ENCODE measurements at regions of chr14 and their contacts with region 1.

Region 1: DNA sequence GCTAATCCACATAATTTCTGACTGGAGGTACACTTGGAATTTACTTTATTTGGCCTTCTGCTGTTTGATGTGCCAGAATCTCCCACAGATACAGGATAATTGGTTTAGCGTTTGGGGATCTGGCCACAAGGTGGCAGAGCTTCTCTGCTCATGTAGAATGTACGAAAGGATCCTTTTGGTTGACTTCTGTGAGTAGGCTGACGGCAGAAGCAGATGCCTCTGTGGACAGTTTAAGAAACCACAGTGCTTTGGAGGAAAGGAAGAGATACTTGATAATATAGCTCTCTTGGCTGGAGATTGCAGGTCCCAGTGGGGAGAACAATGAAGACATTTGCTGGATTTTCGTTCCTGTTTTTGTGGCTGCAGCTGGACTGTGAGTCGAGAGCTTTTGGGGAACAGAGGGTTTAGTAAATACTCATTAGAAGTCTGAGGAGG is 75.3 kb upstream of the OR4E1 start:
- DNase-seq: peak; percentile 81
- ATAC-seq: peak; percentile 87
- H3K4me3 Mint-ChIP-seq: peak overlapping the region; percentile 51
- H3K27ac Mint-ChIP-seq: peak overlapping the region; percentile 9
- H3K4me1 Mint-ChIP-seq: peaks cover 8% of the 10 kb centered on the region
- H3K27me3 Mint-ChIP-seq: peaks cover 8% of the 10 kb centered on the region
- CTCF ChIP-seq: peak; percentile 73

Region 2: GRCh38 chr14:21734457-21735074 is 14.3 kb before region 1 on chr14:
- CTCF ChIA-PET with region 1: interaction called, 25 read pairs
- POLR2A ChIA-PET with region 1: no interaction called
- intact Hi-C with region 1: no loop called
- DNase-seq: peak; percentile 57
- ATAC-seq: peak; percentile 50
- H3K4me3 Mint-ChIP-seq: peak overlapping the region; percentile 62
- H3K27ac Mint-ChIP-seq: no peak overlapping the region
- H3K4me1 Mint-ChIP-seq: peaks cover 14% of the 10 kb centered on the region
- H3K27me3 Mint-ChIP-seq: peaks cover 21% of the 10 kb centered on the region
- CTCF ChIP-seq: peak; percentile 86

Region 3: DNA sequence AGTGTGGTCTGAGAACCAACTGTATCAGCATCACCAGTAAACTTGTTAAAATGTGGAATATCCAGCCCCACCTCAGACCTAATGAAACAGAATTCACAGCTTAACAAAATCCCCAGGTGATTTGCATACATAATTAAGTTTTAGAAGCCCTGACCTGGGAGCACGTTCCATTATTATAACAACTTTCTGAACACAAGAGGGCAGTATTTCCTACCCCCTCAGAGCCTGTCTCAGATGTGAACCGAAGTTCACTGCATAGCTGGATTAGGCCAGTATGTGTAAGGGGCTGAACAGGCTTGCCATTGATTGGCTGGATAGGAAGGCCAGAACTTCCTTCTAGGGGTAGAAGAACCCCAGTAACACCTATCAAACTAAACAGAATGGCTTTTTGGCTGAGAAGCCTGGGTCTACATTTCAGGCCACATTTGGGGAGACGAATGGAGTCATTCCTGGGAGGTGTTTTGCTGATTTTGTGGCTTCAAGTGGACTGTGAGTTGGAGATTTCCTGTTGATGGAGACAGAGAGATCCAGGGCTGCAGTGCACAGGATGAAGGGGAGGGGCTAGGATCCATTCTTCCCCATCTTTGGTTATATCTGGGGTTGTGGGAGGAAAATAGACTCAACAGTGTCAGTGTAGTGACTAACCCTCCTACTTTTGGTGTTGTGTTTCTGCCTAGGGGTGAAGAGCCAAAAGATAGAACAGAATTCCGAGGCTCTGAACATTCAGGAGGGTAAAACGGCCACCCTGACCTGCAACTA is 19.4 kb after region 1 on chr14:
- CTCF ChIA-PET with region 1: interaction called, 14 read pairs
- POLR2A ChIA-PET with region 1: no interaction called
- intact Hi-C with region 1: no loop called
- DNase-seq: peak; percentile 39
- ATAC-seq: peak; percentile 91
- H3K4me3 Mint-ChIP-seq: peak overlapping the region; percentile 48
- H3K27ac Mint-ChIP-seq: peak overlapping the region; percentile 54
- H3K4me1 Mint-ChIP-seq: no peaks in the 10 kb centered on the region
- H3K27me3 Mint-ChIP-seq: peaks cover 12% of the 10 kb centered on the region
- CTCF ChIP-seq: peak; percentile 67

Region 4: DNA sequence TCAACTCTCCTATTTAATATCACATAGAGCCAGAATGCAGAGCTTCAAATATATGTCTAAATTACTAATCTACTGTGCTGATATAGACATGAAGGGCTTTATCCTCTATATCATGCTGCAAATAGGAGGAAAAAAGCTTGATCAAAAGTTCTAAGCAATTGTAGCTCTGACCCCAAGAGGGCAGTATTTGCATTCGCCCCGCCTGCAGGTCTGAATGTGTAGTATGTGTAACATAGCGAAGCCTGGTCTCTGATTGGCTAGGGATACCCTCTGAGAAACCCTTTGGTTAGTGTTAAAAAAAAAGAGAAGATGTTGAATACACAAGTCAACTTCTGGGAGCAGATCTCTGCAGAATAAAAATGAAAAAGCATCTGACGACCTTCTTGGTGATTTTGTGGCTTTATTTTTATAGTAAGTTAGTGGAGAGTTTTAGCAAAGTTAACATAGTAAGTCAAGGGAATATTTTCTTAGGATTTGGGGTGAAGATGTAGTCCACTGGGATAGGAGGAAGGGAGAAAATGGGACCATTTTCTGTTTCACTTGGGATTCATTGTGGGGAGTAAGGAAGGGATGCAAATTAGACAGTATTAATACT is 76.4 kb after region 1 on chr14:
- CTCF ChIA-PET with region 1: interaction called, 10 read pairs
- POLR2A ChIA-PET with region 1: no interaction called
- intact Hi-C with region 1: no loop called
- DNase-seq: peak; percentile 64
- ATAC-seq: peak; percentile 99
- H3K4me3 Mint-ChIP-seq: peak overlapping the region; percentile 61
- H3K27ac Mint-ChIP-seq: no peak overlapping the region
- H3K4me1 Mint-ChIP-seq: peaks cover 4% of the 10 kb centered on the region
- H3K27me3 Mint-ChIP-seq: peaks cover 26% of the 10 kb centered on the region
- CTCF ChIP-seq: peak; percentile 73